ENCODE measurements at regions of chr16 and their contacts with region 1.

Region 1: GRCh38 chr16:27639561-27640276 is 89.8 kb downstream of the KATNIP start:
- DNase-seq: peak; percentile 36
- H3K4me3 Mint-ChIP-seq: no peak overlapping the region
- H3K27ac Mint-ChIP-seq: no peak overlapping the region
- H3K4me1 Mint-ChIP-seq: no peaks in the 10 kb centered on the region
- H3K27me3 Mint-ChIP-seq: no peaks in the 10 kb centered on the region

Region 2: GRCh38 chr16:27566417-27566816 is 73.3 kb before region 1 on chr16:
- CTCF ChIA-PET with region 1: no interaction called
- POLR2A ChIA-PET with region 1: no interaction called
- intact Hi-C with region 1: no loop called
- DNase-seq: no peak
- H3K4me3 Mint-ChIP-seq: no peak overlapping the region
- H3K27ac Mint-ChIP-seq: no peak overlapping the region
- H3K4me1 Mint-ChIP-seq: no peaks in the 10 kb centered on the region
- H3K27me3 Mint-ChIP-seq: no peaks in the 10 kb centered on the region

Region 3: GRCh38 chr16:27600381-27600780 is 39.3 kb before region 1 on chr16:
- CTCF ChIA-PET with region 1: no interaction called
- POLR2A ChIA-PET with region 1: no interaction called
- intact Hi-C with region 1: no loop called
- DNase-seq: no peak
- H3K4me3 Mint-ChIP-seq: no peak overlapping the region
- H3K27ac Mint-ChIP-seq: no peak overlapping the region
- H3K4me1 Mint-ChIP-seq: peaks cover 3% of the 10 kb centered on the region
- H3K27me3 Mint-ChIP-seq: no peaks in the 10 kb centered on the region

Region 4: GRCh38 chr16:27822995-27823394 is 183.3 kb after region 1 on chr16:
- CTCF ChIA-PET with region 1: no interaction called
- POLR2A ChIA-PET with region 1: no interaction called
- intact Hi-C with region 1: no loop called
- DNase-seq: no peak
- H3K4me3 Mint-ChIP-seq: no peak overlapping the region
- H3K27ac Mint-ChIP-seq: no peak overlapping the region
- H3K4me1 Mint-ChIP-seq: no peaks in the 10 kb centered on the region
- H3K27me3 Mint-ChIP-seq: peaks cover 9% of the 10 kb centered on the region

Region 5: DNA sequence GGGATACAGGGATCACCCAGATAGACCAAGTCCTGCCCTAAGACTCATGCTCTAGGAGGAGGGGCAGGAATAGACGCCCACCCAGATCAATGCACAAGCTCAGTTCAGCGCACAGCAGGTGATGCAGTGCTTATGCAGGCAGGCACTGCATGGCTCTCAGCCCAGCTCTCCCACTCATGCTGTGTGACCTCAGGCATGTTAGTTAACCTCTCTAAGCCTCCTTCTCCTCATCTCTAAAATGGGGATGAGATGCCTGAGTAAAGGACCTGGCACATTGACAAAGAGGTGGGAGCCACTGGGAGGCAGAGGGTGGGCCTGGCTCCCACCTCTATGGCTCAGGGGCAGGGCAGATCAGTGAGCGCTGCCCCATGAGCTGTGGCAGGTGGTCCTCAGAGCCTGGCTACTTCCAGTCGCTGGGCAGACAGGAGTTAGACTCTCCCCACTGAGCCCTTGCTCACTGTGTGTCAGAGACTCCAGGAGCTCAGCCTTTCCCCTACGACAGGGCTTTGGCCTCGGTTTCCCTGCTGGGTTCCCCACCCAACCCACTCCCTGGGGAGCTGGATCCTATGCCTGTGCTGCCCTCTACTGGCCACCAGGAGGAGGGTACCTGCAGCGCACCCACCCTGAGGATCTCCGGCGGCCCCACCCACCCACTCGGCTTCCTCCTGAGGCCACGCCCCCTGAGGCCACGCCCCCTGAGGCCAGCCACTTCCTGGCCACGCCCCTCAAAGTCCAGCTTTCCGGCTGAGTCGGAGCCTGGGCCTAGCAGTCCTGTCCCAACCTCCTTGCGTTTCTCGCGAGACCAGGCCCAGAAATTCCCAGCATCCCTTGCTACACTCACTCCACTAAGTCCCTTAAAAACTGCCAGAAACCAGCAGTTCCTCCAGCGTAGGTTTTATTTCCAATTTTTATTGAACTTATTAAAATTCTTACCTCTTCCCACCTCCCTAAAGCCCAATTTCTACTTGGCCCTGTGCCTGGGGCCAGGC is 227.7 kb after region 1 on chr16:
- CTCF ChIA-PET with region 1: interaction called, 6 read pairs
- POLR2A ChIA-PET with region 1: no interaction called
- intact Hi-C with region 1: loop called (anchors 5 kb)
- DNase-seq: peak; percentile 83
- H3K4me3 Mint-ChIP-seq: no peak overlapping the region
- H3K27ac Mint-ChIP-seq: no peak overlapping the region
- H3K4me1 Mint-ChIP-seq: peaks cover 3% of the 10 kb centered on the region
- H3K27me3 Mint-ChIP-seq: no peaks in the 10 kb centered on the region